ENCODE measurements at regions of chr7 and their contacts with region 1.

Region 1: GRCh38 chr7:124152859-124153692 is 120.2 kb upstream of the TMEM229A start:
- DNase-seq: peak; percentile 66
- H3K4me3 ChIP-seq: no peak overlapping the region
- H3K27ac ChIP-seq: no peak overlapping the region
- H3K4me1 ChIP-seq: peaks cover 6% of the 10 kb centered on the region
- H3K27me3 ChIP-seq: no peaks in the 10 kb centered on the region
- CTCF ChIP-seq: peak; percentile 58

Region 2: DNA sequence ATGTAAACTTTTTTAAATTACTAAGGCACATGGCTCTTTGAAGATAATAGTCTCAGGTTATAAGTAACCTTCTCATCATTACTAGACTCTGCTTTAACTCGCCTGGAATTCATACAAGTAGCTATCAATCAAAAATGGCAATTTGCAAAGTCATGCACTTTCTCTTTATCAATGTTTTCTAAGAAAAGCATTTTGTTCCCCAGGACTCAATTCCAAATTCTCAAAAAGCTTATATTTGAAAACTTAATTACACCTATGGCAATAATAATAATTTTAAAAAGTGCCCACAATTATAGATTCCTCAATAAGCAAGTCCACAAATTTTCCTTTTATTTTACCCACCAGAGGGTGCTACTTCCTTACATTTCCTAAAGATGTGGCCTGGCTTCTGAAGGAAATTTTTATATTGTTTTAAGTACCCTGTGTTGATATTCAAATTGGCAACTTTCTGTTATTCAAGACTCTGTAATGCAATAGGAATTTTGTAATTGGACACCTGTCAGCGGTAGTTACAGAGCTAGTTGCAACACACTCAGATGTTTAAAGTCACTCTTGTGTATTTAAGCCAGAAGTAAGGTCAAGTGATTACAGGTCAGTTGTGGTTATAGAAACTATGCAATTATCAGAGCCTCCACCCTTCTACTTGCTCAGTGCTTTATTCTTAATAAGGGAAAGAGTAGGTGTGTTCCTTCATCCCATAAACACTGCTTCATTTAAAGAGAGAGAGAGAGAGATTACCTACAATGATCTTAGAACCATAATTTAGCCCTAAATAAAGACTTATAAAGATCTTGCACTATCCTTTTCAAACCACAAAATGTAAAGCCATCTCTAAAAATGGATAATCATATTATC is 355.2 kb before region 1 on chr7:
- CTCF ChIA-PET with region 1: no interaction called
- POLR2A ChIA-PET with region 1: no interaction called
- intact Hi-C with region 1: loop called (anchors 5 kb)
- DNase-seq: peak; percentile 70
- H3K4me3 ChIP-seq: no peak overlapping the region
- H3K27ac ChIP-seq: no peak overlapping the region
- H3K4me1 ChIP-seq: no peaks in the 10 kb centered on the region
- H3K27me3 ChIP-seq: no peaks in the 10 kb centered on the region
- CTCF ChIP-seq: peak; percentile 72

Region 3: GRCh38 chr7:124032369-124033094 is 120.5 kb before region 1 on chr7 and contains the start of gene TMEM229A:
- CTCF ChIA-PET with region 1: no interaction called
- POLR2A ChIA-PET with region 1: no interaction called
- intact Hi-C with region 1: loop called (anchors 5 kb)
- DNase-seq: peak; percentile 78
- H3K4me3 ChIP-seq: peak within 1 kb of the TSS; percentile 77
- H3K27ac ChIP-seq: peak within 1 kb of the TSS; percentile 98
- H3K4me1 ChIP-seq: peaks cover 54% of the 10 kb centered on the region
- H3K27me3 ChIP-seq: no peaks in the 10 kb centered on the region
- CTCF ChIP-seq: 0 out of 2 replicates have a peak, but pooled peaks have one; percentile 25
- total RNA-seq, gene TMEM229A: 22.2 and 24.6 TPM in 2 replicates

Region 4: GRCh38 chr7:124536156-124536762 is 383.2 kb after region 1 on chr7:
- CTCF ChIA-PET with region 1: no interaction called
- POLR2A ChIA-PET with region 1: no interaction called
- intact Hi-C with region 1: no loop called
- DNase-seq: no peak
- H3K4me3 ChIP-seq: no peak overlapping the region
- H3K27ac ChIP-seq: no peak overlapping the region
- H3K4me1 ChIP-seq: no peaks in the 10 kb centered on the region
- H3K27me3 ChIP-seq: no peaks in the 10 kb centered on the region
- CTCF ChIP-seq: no peak

Region 5: GRCh38 chr7:124784879-124785818 is 632.1 kb after region 1 on chr7:
- CTCF ChIA-PET with region 1: interaction called, 4 read pairs
- POLR2A ChIA-PET with region 1: no interaction called
- intact Hi-C with region 1: loop called (anchors 1 kb)
- DNase-seq: peak; percentile 79
- H3K4me3 ChIP-seq: no peak overlapping the region
- H3K27ac ChIP-seq: no peak overlapping the region
- H3K4me1 ChIP-seq: no peaks in the 10 kb centered on the region
- H3K27me3 ChIP-seq: no peaks in the 10 kb centered on the region
- CTCF ChIP-seq: peak; percentile 91

Region 6: DNA sequence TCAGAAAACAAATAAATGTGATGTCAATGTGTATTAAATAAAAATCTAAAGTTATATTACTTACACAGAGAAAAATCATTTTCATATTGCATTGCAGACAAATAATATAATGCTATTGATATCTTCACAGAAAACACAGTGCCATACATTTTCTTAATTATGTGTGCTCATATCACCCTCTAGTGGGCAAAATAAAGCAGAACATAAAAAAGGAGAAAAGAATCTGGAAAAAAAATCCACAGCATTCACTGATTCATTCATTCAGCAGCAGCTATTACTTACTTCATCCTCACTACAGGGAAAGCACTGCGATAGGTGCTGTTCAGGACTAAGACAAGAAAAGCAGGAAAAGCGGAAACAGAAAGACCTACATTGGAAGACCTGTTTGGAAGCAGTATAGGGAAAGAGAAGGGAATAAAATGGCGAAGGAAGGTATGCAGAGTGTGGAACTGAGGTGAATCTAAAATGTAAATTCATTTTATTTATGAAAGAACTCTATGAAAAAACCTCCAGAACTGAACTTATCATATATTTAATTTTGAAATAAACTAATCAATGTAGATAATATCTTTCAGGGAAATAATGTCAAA is 703.3 kb after region 1 on chr7:
- CTCF ChIA-PET with region 1: interaction called, 3 read pairs
- POLR2A ChIA-PET with region 1: no interaction called
- intact Hi-C with region 1: loop called (anchors 5 kb)
- DNase-seq: peak; percentile 52
- H3K4me3 ChIP-seq: no peak overlapping the region
- H3K27ac ChIP-seq: no peak overlapping the region
- H3K4me1 ChIP-seq: no peaks in the 10 kb centered on the region
- H3K27me3 ChIP-seq: no peaks in the 10 kb centered on the region
- CTCF ChIP-seq: peak; percentile 76

Measured in A673 (cell line).